ENCODE measurements at regions of chr11 and their contacts with region 1.

Region 1: GRCh38 chr11:27472398-27473016 is at the start of gene LGR4:
- DNase-seq: peak; percentile 84 to 96
- ATAC-seq: peak; percentile 86 to 95
- H3K4me3 ChIP-seq: peak within 1 kb of the TSS; percentile 89
- H3K27ac ChIP-seq: peak within 1 kb of the TSS; percentile 94 to 98
- H3K4me1 ChIP-seq: peaks cover 16% of the 10 kb centered on the region; the same call in 2 of the 3 replicates
- CTCF ChIP-seq: no peak
- EP300 ChIP-seq: no peak
- POLR2A ChIP-seq: peak; percentile 84
- RAD21 ChIP-seq: peak in 1 of 2 experiments; percentile 20; a peak in 2 of 5 replicates
- polyA plus RNA-seq, gene LGR4: 130 and 145 TPM in 2 replicates

Region 2: GRCh38 chr11:27347361-27348339 is 124.9 kb before region 1 on chr11:
- CTCF ChIA-PET with region 1: no interaction called
- POLR2A ChIA-PET with region 1: interaction called, 10 read pairs
- DNase-seq: peak in 1 of 2 experiments; percentile 61
- ATAC-seq: peak; percentile 88 to 90
- H3K4me3 ChIP-seq: peak overlapping the region; percentile 21; the same call in 2 of the 3 replicates
- H3K27ac ChIP-seq: peak overlapping the region; percentile 76 to 79
- H3K4me1 ChIP-seq: peaks cover 52% of the 10 kb centered on the region
- CTCF ChIP-seq: no peak
- EP300 ChIP-seq: no peak
- POLR2A ChIP-seq: no peak
- RAD21 ChIP-seq: no peak

Region 3: GRCh38 chr11:27362749-27363575 is 109.5 kb before region 1 on chr11 and contains the start of gene CCDC34:
- CTCF ChIA-PET with region 1: interaction called, 3 read pairs
- POLR2A ChIA-PET with region 1: interaction called, 14 read pairs
- DNase-seq: peak; percentile 87 to 93
- ATAC-seq: peak; percentile 96
- H3K4me3 ChIP-seq: peak within 1 kb of the TSS; percentile 65
- H3K27ac ChIP-seq: peak within 1 kb of the TSS; percentile 83 to 92
- H3K4me1 ChIP-seq: peaks cover 51% of the 10 kb centered on the region
- CTCF ChIP-seq: no peak
- EP300 ChIP-seq: no peak
- POLR2A ChIP-seq: peak; percentile 24; the same call in 1 of the 2 replicates
- RAD21 ChIP-seq: peak in 1 of 2 experiments; percentile 31; a peak in 3 of 5 replicates
- polyA plus RNA-seq, gene CCDC34: 33.1 and 35.9 TPM in 2 replicates

Region 4: DNA sequence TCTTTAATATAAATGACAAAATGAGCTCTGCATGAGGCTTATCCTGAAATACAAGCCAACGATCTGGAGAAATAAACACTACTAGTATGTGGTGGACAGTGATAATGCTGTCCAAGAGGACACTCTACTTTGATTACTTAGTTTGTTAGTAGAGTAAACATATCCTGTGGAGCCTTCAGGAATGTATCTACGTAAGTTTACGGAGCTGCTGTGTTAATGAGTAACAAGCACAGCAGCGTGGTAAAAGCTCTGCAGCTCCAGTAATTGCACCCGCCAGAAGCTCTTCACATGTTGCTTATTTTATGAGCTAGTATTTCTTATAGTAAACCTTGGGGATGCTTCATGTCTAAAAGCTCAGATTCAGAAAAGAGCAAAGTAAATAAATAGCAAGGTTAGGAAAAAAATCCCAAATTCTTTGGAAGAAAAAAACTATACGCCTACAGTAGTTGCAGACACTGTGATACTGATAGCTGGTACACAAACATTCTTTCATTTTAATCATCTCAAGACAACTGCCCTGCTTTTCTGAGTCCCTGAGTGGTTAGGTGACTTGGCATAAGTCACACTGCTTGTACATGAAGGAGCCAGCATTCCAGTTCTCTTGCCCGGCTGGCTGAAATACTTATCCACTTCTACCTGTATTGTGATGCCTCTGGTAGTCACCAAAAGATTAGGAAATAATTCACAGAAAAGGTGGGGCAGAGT is 76.8 kb before region 1 on chr11:
- CTCF ChIA-PET with region 1: interaction called, 3 read pairs
- POLR2A ChIA-PET with region 1: interaction called, 11 read pairs
- DNase-seq: peak; percentile 40 to 97
- ATAC-seq: peak; percentile 90 to 95
- H3K4me3 ChIP-seq: peak overlapping the region; percentile 26; the same call in 2 of the 3 replicates
- H3K27ac ChIP-seq: peak overlapping the region; percentile 90 to 96
- H3K4me1 ChIP-seq: peaks cover 93% of the 10 kb centered on the region
- CTCF ChIP-seq: no peak
- EP300 ChIP-seq: peak; percentile 94
- POLR2A ChIP-seq: no peak
- RAD21 ChIP-seq: peak; percentile 19 to 56; a peak in 3 of 5 replicates

Measured in A549 (cell line).